HEK293 (cell line): ENCODE measurements at regions of chr15 and their contacts with region 1.

Region 1: GRCh38 chr15:60397772-60398445 is at the start of gene ANXA2:
- H3K4me3 ChIP-seq: peak within 1 kb of the TSS; percentile 88
- H3K27ac ChIP-seq: peak within 1 kb of the TSS; percentile 85
- H3K4me1 ChIP-seq: peaks cover 18% of the 10 kb centered on the region
- CTCF ChIP-seq: no peak

Region 2: DNA sequence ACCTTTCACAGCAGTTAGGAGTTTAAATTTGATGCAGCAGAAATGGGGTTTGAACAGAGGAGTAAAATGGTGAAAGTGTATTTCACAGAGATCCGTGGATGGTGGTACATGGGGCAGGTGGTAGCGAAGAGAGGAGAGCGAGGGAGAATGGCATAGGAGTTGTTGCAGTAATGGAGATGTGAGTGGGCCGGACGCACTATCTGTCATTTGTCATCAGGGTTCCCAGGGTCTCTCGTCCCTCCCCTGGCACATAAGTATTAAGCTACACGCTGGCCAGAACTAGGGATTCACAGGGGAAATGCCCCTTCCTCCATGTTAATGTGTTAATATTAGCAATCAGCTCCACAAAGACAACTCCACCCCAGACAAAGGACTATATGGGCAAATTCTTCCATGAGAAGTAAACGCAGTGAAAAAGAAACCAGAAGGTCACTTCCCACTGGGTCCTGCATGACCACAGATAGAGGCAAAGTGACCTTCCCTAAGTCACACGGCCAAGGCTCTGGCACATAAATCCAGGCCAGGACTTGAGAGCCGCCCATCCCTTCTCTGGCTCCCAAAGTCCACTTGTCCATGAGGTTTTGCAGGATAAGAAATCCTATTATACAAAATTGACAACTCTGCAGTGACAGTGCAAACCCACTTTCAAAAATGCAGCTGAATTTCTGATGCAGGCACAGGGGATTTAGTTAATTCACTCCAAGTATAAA is 42.6 kb before region 1 on chr15:
- CTCF ChIA-PET with region 1: interaction called, 3 read pairs
- POLR2A ChIA-PET with region 1: interaction called, 11 read pairs
- H3K4me3 ChIP-seq: no peak overlapping the region
- H3K27ac ChIP-seq: no peak overlapping the region
- H3K4me1 ChIP-seq: no peaks in the 10 kb centered on the region
- CTCF ChIP-seq: no peak

Region 3: DNA sequence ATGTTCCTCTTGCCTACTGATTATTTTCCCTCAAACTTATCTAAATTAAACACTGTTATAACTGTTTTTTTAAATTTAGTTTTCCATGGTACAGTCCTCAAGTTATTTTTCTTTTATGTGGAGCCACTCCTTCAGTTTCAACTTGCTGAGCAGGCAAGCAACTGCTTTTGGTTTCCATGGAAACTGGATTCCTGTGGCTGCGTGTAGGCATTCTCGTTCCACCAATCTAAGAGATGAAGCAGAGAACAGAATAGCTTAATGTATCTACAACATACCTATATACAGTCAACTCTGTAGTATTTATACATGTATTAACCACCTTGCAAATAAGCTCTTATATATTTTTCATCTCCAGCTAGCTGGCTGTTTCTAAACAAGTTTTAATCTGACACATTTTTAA is 25.6 kb after region 1 on chr15:
- CTCF ChIA-PET with region 1: no interaction called
- POLR2A ChIA-PET with region 1: no interaction called
- H3K4me3 ChIP-seq: no peak overlapping the region
- H3K27ac ChIP-seq: no peak overlapping the region
- H3K4me1 ChIP-seq: no peaks in the 10 kb centered on the region
- CTCF ChIP-seq: no peak

Region 4: DNA sequence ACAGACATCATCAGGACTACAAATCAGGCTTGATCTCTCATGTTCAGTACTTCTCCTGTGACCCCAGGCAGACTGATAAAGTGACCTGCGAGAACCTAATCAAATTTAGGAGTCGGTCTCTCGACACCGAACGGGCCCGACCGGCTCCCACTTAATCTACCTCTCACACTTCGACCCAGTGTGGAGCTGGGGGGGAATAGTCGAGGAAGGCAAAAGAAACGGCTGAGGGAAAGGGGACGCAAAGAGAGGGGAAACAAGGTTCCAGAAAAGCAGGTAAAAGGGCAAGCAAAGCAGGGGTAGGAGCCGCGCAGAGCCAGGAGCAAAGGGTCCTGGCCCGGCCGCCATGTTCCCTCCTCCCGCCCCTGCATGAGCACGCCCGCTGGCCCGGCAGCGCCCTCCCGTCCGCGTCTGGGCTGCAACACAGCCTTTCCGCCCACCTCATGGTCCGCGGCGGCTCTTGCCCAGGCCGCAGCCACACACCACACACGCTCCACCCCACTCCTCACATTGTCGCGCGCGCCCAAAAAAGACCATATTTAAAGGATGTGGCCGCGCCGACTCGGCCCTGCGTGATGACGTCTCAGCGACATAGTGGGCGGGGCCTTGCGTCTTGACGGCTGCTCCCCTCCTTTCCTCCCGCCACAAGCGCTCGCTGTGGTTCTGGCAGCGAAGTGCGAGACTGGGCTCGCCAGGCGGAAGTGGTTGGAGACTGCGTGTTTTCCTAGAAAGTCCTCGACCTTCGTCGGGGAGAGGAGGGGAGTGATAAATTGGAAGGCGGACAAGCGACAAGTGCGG is 80.9 kb after region 1 on chr15 and contains the start of gene ICE2:
- CTCF ChIA-PET with region 1: no interaction called
- POLR2A ChIA-PET with region 1: no interaction called
- H3K4me3 ChIP-seq: peak within 1 kb of the TSS; percentile 94
- H3K27ac ChIP-seq: peak within 1 kb of the TSS; percentile 71
- H3K4me1 ChIP-seq: no peaks in the 10 kb centered on the region
- CTCF ChIP-seq: peak; percentile 78

Region 5: DNA sequence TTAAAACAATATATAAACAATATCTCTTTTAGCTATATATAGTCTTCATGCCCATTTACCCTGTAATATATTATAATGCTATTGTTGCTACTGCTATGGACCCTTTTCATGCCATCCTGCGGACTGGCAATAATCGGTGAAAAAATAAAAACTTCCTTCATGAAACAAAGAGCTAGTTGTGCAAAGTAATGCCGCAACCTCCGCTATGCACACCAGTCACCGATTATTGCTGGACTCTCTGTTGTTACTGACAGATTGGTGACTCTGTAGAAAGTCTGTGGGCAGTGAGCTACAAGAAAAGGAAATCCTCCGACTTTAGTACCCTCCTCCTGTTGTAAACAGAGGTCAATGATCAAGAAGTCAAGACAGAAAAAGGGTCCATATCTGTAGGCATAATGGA is 98.9 kb after region 1 on chr15:
- CTCF ChIA-PET with region 1: no interaction called
- POLR2A ChIA-PET with region 1: interaction called, 10 read pairs
- H3K4me3 ChIP-seq: no peak overlapping the region
- H3K27ac ChIP-seq: no peak overlapping the region
- H3K4me1 ChIP-seq: no peaks in the 10 kb centered on the region
- CTCF ChIP-seq: no peak

Region 6: DNA sequence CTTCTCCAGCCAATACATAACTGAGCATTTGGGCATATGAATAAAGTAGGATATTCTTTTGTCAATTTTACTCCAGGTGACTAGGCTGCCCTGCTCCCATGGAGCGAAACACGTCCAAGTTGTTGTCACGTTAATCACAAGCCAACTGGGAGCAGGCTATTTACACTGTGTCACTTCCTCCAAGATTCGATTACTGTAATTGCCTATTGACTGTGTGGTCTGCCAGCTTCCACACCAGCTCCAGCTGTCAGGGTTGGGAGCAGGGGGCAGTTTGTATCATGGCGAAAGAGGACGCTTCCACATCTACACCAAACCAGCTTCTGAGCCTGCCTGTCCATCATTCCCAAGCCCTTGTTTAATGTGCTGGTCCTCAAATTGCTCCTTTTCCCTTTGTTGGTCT is 920.4 kb after region 1 on chr15:
- CTCF ChIA-PET with region 1: no interaction called
- POLR2A ChIA-PET with region 1: no interaction called
- H3K4me3 ChIP-seq: no peak overlapping the region
- H3K27ac ChIP-seq: no peak overlapping the region
- H3K4me1 ChIP-seq: no peaks in the 10 kb centered on the region
- CTCF ChIP-seq: no peak